Aorta (tissue), 5 donors: ENCODE measurements at regions of chr4 and their contacts with region 1.

Region 1: GRCh38 chr4:152640058-152640833 is 39.6 kb downstream of the TMEM154 start:
- DNase-seq: no peak
- ATAC-seq: no peak
- H3K4me3 ChIP-seq: no peak overlapping the region
- H3K27ac ChIP-seq: no peak overlapping the region
- H3K4me1 ChIP-seq: no peaks in the 10 kb centered on the region
- H3K27me3 ChIP-seq: no peaks in the 10 kb centered on the region

Region 2: GRCh38 chr4:152500800-152501434 is 139.3 kb before region 1 on chr4:
- intact Hi-C with region 1: loop called (anchors 2 to 5 kb)
- DNase-seq: no peak
- ATAC-seq: peak; percentile 72
- H3K4me3 ChIP-seq: no peak overlapping the region
- H3K27ac ChIP-seq: no peak overlapping the region
- H3K4me1 ChIP-seq: no peaks in the 10 kb centered on the region
- H3K27me3 ChIP-seq: no peaks in the 10 kb centered on the region